Left ventricle myocardium superior (tissue), 1 donor: ENCODE measurements at regions of chr7 and their contacts with region 1.

Region 1: DNA sequence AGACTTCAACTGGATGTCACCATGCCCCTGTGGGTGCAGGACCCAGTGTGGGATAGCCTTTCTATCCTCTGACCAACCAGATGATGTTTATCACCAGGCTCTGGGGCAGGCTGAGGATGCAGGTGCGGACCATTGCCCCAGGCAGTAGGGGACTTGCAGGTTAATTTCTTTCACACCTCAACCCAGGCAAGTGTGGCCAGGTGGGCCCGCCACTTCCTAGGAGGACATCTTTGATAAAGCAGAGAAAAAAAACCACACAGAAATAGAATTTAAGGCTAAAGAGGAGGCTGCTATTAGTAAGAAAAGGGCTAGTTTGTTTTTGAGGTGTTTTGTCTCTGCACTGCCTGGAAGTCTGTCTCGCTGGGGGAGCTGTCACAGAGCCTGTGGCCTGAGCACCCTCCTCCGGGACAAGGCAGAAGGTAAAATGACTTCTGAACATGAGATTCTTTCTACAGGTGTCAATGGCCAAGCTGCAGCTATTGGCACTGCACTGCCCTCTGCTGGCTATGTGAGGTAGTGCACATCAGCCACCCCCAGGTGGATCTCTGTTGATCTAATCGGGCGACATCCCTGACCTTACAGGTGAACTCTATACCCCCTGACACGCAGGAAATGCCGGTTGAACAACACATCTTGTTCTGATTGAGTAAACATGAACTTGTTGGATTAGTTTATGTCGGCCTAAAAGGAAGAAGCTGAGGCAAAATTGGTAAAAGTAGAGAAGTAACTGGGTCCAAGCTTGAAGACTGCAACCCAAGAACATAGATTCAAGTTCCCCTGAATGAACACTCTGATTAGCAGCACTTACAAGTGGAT is 21.0 kb downstream of the UPP1 start:
- DNase-seq: peak; percentile 82
- ATAC-seq: peak; percentile 80

Region 2: GRCh38 chr7:47945261-47946001 is 164.6 kb before region 1 on chr7:
- intact Hi-C with region 1: loop called (anchors 10 kb)
- DNase-seq: peak; percentile 87
- ATAC-seq: no peak

Region 3: DNA sequence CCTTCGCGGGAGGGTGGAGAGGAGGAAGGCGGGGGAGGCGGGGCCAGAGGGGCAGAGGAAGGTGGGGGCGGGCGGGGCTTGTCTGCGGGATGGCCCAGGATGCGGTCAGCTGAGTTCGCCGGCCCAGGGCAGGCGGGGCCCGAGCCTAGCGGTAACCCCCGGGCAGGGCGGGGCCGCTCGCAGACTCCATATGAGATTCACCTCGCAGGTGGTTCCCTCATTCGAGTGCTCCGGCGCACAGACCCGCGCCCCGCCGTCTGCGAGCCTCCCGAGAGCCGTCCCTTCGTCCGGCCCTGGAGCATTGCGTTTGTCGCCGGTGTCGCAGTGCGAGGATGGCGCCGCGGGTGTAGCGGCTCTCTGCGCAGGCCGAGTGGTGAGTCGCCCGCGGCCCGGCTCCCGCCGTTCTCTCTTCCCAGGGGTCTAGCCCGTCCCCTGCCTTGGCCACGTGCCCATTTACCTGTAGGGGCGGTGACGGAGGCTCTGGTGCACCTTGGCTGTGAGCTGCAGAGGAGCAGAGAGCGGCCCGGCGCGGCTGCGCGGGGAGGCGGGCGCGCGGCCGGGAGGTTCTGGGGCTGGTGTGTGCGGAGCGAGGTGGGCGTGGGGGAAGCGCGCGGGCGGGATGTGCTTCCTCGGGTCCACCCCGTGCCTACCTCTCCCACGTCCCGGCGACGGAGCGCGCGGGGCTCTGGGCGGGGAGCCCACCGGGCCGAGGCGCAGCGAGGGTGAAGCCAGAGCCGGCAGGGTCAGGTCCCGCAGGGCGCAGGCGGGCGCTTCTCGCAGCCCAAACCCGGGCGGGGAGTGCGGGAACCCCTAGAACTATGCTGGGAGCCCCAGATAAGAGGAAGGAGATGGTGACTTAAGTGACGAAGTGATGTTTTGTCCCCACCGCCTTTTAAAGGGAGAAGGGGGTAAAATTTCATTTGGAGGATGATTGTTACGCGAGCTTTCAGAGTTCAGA is 20.7 kb before region 1 on chr7 and contains the start of gene UPP1:
- intact Hi-C with region 1: loop called (anchors 1 kb)
- DNase-seq: peak; percentile 96
- ATAC-seq: peak; percentile 95
- total RNA-seq, gene UPP1: 20.9 TPM